ENCODE measurements at regions of chr4 and their contacts with region 1.

Region 1: GRCh38 chr4:39103291-39103690 is 41.3 kb downstream of the KLHL5 start:
- DNase-seq: no peak
- ATAC-seq: no peak
- H3K4me3 ChIP-seq: no peak overlapping the region
- H3K27ac ChIP-seq: no peak overlapping the region
- H3K4me1 ChIP-seq: no peaks in the 10 kb centered on the region
- H3K27me3 ChIP-seq: no peaks in the 10 kb centered on the region
- CTCF ChIP-seq: no peak
- POLR2A ChIP-seq: no peak
- RAD21 ChIP-seq: no peak

Region 2: GRCh38 chr4:39032218-39033085 is 70.8 kb before region 1 on chr4 and contains the start of gene TMEM156:
- CTCF ChIA-PET with region 1: no interaction called
- POLR2A ChIA-PET with region 1: no interaction called
- dilution Hi-C with region 1: no loop called
- in situ Hi-C with region 1: no loop called
- intact Hi-C with region 1: no loop called
- DNase-seq: peak; percentile 80
- ATAC-seq: peak; percentile 63
- H3K4me3 ChIP-seq: no peak within 1 kb of the TSS
- H3K27ac ChIP-seq: peak within 1 kb of the TSS; percentile 87
- H3K4me1 ChIP-seq: peaks cover 20% of the 10 kb centered on the region
- H3K27me3 ChIP-seq: no peaks in the 10 kb centered on the region
- CTCF ChIP-seq: no peak
- POLR2A ChIP-seq: no peak
- RAD21 ChIP-seq: no peak
- total RNA-seq, gene TMEM156: 0.54 and 0.83 TPM in 2 replicates

Region 3: DNA sequence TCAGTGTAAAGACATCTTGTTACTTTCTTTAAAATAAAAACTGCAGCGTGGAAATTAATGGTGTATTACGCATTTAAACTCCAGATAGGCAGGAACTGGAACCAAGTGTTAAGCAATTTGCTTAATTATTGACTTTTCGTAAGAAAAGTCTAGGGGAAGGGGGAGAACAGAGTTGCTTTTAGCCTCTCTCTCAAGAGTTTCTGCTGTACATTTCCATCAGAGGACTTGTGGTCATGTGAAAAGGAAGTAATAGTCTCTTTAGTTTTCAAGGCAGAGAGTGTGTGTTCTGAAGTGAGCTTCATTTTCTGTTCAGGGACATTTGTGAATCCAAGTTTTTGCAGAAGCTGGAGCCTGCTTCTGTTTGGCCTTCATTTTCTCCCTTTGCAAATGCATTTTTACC is 721.8 kb after region 1 on chr4:
- CTCF ChIA-PET with region 1: interaction called, 10 read pairs
- POLR2A ChIA-PET with region 1: no interaction called
- dilution Hi-C with region 1: no loop called
- in situ Hi-C with region 1: no loop called
- intact Hi-C with region 1: no loop called
- DNase-seq: no peak
- ATAC-seq: no peak
- H3K4me3 ChIP-seq: no peak overlapping the region
- H3K27ac ChIP-seq: no peak overlapping the region
- H3K4me1 ChIP-seq: 0 out of 2 replicates have a peak, but pooled peaks cover 2% of the 10 kb centered on the region
- H3K27me3 ChIP-seq: no peaks in the 10 kb centered on the region
- CTCF ChIP-seq: no peak
- POLR2A ChIP-seq: no peak
- RAD21 ChIP-seq: no peak

Region 4: GRCh38 chr4:40238700-40239548 is 1135.6 kb after region 1 on chr4:
- CTCF ChIA-PET with region 1: no interaction called
- POLR2A ChIA-PET with region 1: no interaction called
- dilution Hi-C with region 1: no loop called
- in situ Hi-C with region 1: no loop called
- intact Hi-C with region 1: no loop called
- DNase-seq: no peak
- ATAC-seq: no peak
- H3K4me3 ChIP-seq: no peak overlapping the region
- H3K27ac ChIP-seq: no peak overlapping the region
- H3K4me1 ChIP-seq: no peaks in the 10 kb centered on the region
- H3K27me3 ChIP-seq: peaks cover 21% of the 10 kb centered on the region
- CTCF ChIP-seq: no peak
- POLR2A ChIP-seq: no peak
- RAD21 ChIP-seq: no peak